ENCODE measurements at regions of chr12 and their contacts with region 1.

Region 1: GRCh38 chr12:112382232-112382796 is at the start of gene HECTD4:
- DNase-seq: peak; percentile 77 to 96 (median 93)
- ATAC-seq: peak; percentile 98
- H3K4me3 ChIP-seq: peak within 1 kb of the TSS; percentile 72 to 83
- H3K4me3 Mint-ChIP-seq: peak within 1 kb of the TSS; percentile 95
- H3K27ac ChIP-seq: peak within 1 kb of the TSS; percentile 43 to 68
- H3K27ac Mint-ChIP-seq: peak within 1 kb of the TSS; percentile 88
- H3K4me1 ChIP-seq: peaks cover 13% of the 10 kb centered on the region
- H3K4me1 Mint-ChIP-seq: peaks cover 25% of the 10 kb centered on the region
- H3K27me3 ChIP-seq: no peaks in the 10 kb centered on the region
- H3K27me3 Mint-ChIP-seq: peaks cover under 1% of the 10 kb centered on the region
- CTCF ChIP-seq: no peak
- total RNA-seq, gene HECTD4: 31.8 to 39.6 TPM

Region 2: GRCh38 chr12:111942557-111942956 is 439.8 kb before region 1 on chr12:
- CTCF ChIA-PET with region 1: interaction called, 3 read pairs
- POLR2A ChIA-PET with region 1: no interaction called
- intact Hi-C with region 1: loop called (anchors 1 to 10 kb)
- DNase-seq: no peak
- ATAC-seq: no peak
- H3K4me3 ChIP-seq: no peak overlapping the region
- H3K4me3 Mint-ChIP-seq: no peak overlapping the region
- H3K27ac ChIP-seq: no peak overlapping the region
- H3K27ac Mint-ChIP-seq: no peak overlapping the region
- H3K4me1 ChIP-seq: no peaks in the 10 kb centered on the region
- H3K4me1 Mint-ChIP-seq: peaks cover 13% of the 10 kb centered on the region
- H3K27me3 ChIP-seq: no peaks in the 10 kb centered on the region
- H3K27me3 Mint-ChIP-seq: no peaks in the 10 kb centered on the region
- CTCF ChIP-seq: no peak

Region 3: GRCh38 chr12:112108201-112109079 is 273.9 kb before region 1 on chr12 and contains the start of gene NAA25:
- CTCF ChIA-PET with region 1: interaction called, 7 read pairs
- POLR2A ChIA-PET with region 1: interaction called, 3 read pairs
- intact Hi-C with region 1: loop called in 1 of 2 experiments (anchors 1 kb)
- DNase-seq: peak; percentile 66 to 92 (median 87)
- ATAC-seq: peak; percentile 80
- H3K4me3 ChIP-seq: peak within 1 kb of the TSS; percentile 91 to 100
- H3K4me3 Mint-ChIP-seq: peak within 1 kb of the TSS; percentile 97
- H3K27ac ChIP-seq: peak within 1 kb of the TSS; percentile 80 to 92
- H3K27ac Mint-ChIP-seq: peak within 1 kb of the TSS; percentile 96
- H3K4me1 ChIP-seq: peaks cover 35% of the 10 kb centered on the region
- H3K4me1 Mint-ChIP-seq: peaks cover 44% of the 10 kb centered on the region
- H3K27me3 ChIP-seq: no peaks in the 10 kb centered on the region
- H3K27me3 Mint-ChIP-seq: no peaks in the 10 kb centered on the region
- CTCF ChIP-seq: no peak
- total RNA-seq, gene NAA25: 35.1 to 35.3 TPM

Region 4: DNA sequence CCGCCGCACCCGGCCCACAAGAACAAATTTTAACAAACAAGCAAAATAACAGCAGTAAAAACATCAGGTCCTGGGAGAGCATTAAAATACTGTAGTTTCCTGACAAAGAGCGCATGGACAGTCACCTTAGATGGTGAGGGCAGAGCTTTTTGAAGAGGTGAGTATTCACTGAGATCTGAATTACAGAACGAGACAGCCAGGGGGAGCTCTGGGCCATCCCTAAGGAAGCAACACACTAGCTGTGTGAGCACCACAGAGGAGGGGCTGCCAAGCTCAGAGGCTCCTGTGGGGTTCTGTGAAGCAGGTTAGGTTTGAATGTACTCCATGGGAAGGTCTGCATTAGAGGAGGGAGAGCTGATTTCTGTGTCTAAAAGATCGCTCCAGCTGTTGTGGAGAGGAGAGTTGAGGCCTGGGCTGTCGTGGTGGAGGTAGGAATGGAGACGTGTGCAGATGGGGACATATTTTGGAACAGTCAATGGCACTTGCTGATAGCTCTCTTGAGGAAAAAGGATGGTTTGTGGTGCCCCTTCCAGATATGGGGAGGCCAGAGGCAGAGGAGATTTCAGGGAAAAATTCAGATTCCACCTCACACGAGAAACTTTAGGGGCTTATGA is 184.1 kb before region 1 on chr12:
- CTCF ChIA-PET with region 1: interaction called, 52 read pairs
- POLR2A ChIA-PET with region 1: interaction called, 3 read pairs
- intact Hi-C with region 1: loop called (anchors 1 kb)
- DNase-seq: peak in 8 of 9 experiments; percentile 13 to 59 (median 43)
- ATAC-seq: peak; percentile 78
- H3K4me3 ChIP-seq: no peak overlapping the region
- H3K4me3 Mint-ChIP-seq: no peak overlapping the region
- H3K27ac ChIP-seq: no peak overlapping the region
- H3K27ac Mint-ChIP-seq: no peak overlapping the region
- H3K4me1 ChIP-seq: no peaks in the 10 kb centered on the region
- H3K4me1 Mint-ChIP-seq: no peaks in the 10 kb centered on the region
- H3K27me3 ChIP-seq: no peaks in the 10 kb centered on the region
- H3K27me3 Mint-ChIP-seq: no peaks in the 10 kb centered on the region
- CTCF ChIP-seq: peak; percentile 30

Region 5: DNA sequence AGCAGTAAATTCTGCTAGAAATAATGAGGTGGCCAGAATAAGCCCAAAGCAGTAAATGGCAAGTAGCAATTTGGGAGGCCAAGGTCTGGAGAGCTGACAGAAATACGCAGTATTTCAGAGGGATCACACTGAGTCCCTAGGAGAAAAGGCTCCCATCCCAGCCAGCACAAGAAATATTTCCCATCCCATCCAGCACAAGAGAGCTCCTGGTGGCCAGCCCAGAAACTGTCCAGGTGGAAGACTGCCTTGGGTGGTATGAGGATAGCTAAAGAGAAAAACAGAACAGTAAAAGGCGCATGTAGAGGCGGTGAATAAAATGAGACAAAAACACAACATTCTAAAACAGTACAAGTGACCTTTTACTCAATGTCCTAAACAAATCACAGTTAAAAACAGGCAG is 120.8 kb before region 1 on chr12:
- CTCF ChIA-PET with region 1: no interaction called
- POLR2A ChIA-PET with region 1: no interaction called
- intact Hi-C with region 1: loop called in 1 of 2 experiments (anchors 10 kb)
- DNase-seq: no peak
- ATAC-seq: no peak
- H3K4me3 ChIP-seq: no peak overlapping the region
- H3K4me3 Mint-ChIP-seq: no peak overlapping the region
- H3K27ac ChIP-seq: no peak overlapping the region
- H3K27ac Mint-ChIP-seq: no peak overlapping the region
- H3K4me1 ChIP-seq: no peaks in the 10 kb centered on the region
- H3K4me1 Mint-ChIP-seq: no peaks in the 10 kb centered on the region
- H3K27me3 ChIP-seq: no peaks in the 10 kb centered on the region
- H3K27me3 Mint-ChIP-seq: no peaks in the 10 kb centered on the region
- CTCF ChIP-seq: no peak

Region 6: GRCh38 chr12:112409064-112409905 is 27.0 kb after region 1 on chr12 and contains the start of gene RPL6:
- CTCF ChIA-PET with region 1: interaction called, 10 read pairs
- POLR2A ChIA-PET with region 1: interaction called, 3 read pairs
- intact Hi-C with region 1: loop called (anchors 1 kb)
- DNase-seq: peak; percentile 56 to 93 (median 75)
- ATAC-seq: peak; percentile 81
- H3K4me3 ChIP-seq: peak within 1 kb of the TSS; percentile 83 to 89
- H3K4me3 Mint-ChIP-seq: peak within 1 kb of the TSS; percentile 100
- H3K27ac ChIP-seq: peak within 1 kb of the TSS; percentile 87 to 92
- H3K27ac Mint-ChIP-seq: peak within 1 kb of the TSS; percentile 100
- H3K4me1 ChIP-seq: peaks cover 28% of the 10 kb centered on the region
- H3K4me1 Mint-ChIP-seq: peaks cover 38% of the 10 kb centered on the region
- H3K27me3 ChIP-seq: no peaks in the 10 kb centered on the region
- H3K27me3 Mint-ChIP-seq: no peaks in the 10 kb centered on the region
- CTCF ChIP-seq: no peak
- total RNA-seq, gene RPL6: 1,700 to 1,770 TPM

Region 7: DNA sequence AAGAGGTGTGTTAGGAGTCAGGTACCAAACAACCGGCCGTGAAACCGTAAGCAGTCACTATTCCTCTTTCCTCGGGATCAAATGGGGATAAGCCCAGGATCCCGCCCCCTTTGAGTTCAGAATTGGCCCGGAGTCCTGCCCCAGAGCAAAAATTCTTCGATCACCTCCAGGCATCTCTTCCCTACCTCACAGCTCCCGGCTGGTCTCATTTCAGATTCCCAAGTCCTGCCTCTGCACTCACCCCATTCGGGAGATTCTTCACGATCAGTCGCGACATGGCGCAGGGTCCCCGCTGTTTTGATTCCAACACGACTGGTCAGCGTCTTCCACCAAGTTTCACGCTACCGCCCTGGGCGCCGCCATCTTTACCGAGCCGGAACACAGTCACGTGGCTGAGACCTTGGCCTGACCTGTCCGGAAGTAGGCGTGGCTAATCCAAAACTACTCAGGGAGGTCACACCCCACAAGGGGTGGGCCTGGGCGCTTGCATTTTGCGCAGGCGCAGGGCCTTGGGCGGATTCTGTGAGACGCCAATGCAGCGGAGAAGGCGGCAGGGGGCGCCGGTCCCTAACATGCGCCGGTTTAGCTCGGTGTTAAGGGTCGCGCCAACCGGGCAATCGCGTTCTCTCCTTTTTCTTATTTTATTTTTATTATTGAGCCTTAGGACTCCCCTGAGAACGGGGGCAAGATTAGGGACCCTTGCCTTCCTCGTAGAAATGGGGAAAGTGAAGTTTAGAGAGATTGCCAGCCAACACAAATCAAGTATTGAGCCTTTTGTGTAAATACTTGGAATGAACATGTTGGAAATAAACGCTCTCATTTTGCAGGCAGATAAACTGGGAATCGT is 1583.9 kb after region 1 on chr12 and contains the start of gene RBM19:
- CTCF ChIA-PET with region 1: no interaction called
- POLR2A ChIA-PET with region 1: no interaction called
- intact Hi-C with region 1: loop called in 1 of 2 experiments (anchors 5 kb)
- DNase-seq: peak; percentile 93 to 99 (median 98)
- ATAC-seq: peak; percentile 98
- H3K4me3 ChIP-seq: peak within 1 kb of the TSS; percentile 76 to 95
- H3K4me3 Mint-ChIP-seq: peak within 1 kb of the TSS; percentile 98
- H3K27ac ChIP-seq: peak within 1 kb of the TSS; percentile 62 to 63
- H3K27ac Mint-ChIP-seq: peak within 1 kb of the TSS; percentile 95
- H3K4me1 ChIP-seq: peaks cover 16% of the 10 kb centered on the region
- H3K4me1 Mint-ChIP-seq: peaks cover 56% of the 10 kb centered on the region
- H3K27me3 ChIP-seq: no peaks in the 10 kb centered on the region
- H3K27me3 Mint-ChIP-seq: no peaks in the 10 kb centered on the region
- CTCF ChIP-seq: peak; percentile 88
- total RNA-seq, gene RBM19: 57.7 to 59.9 TPM